ENCODE measurements at regions of chrX and their contacts with region 1.

Region 1: GRCh38 chrX:47233337-47234113 is 716 bp downstream of the USP11 start:
- DNase-seq: peak; percentile 92 to 95 (median 95)
- ATAC-seq: peak; percentile 94 to 98 (median 96)
- H3K4me3 ChIP-seq: peak overlapping the region; percentile 28 to 89 (median 70)
- H3K27ac ChIP-seq: peak overlapping the region; percentile 88 to 98 (median 95)
- H3K4me1 ChIP-seq: peaks cover 0 to 18% (median 5%) of the 10 kb centered on the region in 12 donors
- H3K27me3 ChIP-seq: peaks cover 0 to 20% (median 0%) of the 10 kb centered on the region in 9 donors
- CTCF ChIP-seq: no peak
- POLR2A ChIP-seq: peak in 1 of 2 donors; percentile 43

Region 2: GRCh38 chrX:47144626-47145394 is 88.7 kb before region 1 on chrX and contains the starts of genes NDUFB11 and RBM10:
- intact Hi-C with region 1: loop called in 1 of 10 experiments (anchors 5 kb)
- DNase-seq: peak; percentile 93 to 96 (median 95)
- ATAC-seq: peak; percentile 96 to 99 (median 98)
- H3K4me3 ChIP-seq: peak within 1 kb of the TSS; percentile 42 to 98 (median 73)
- H3K27ac ChIP-seq: peak within 1 kb of the TSS; percentile 89 to 98 (median 94)
- H3K4me1 ChIP-seq: peaks cover 0 to 32% (median 16%) of the 10 kb centered on the region in 12 donors
- H3K27me3 ChIP-seq: peaks cover 0 to 19% (median 0%) of the 10 kb centered on the region in 9 donors
- CTCF ChIP-seq: peak; percentile 53 to 78 (median 68)
- POLR2A ChIP-seq: peak in 1 of 2 donors; percentile 44
- total RNA-seq, gene NDUFB11: 133 to 217 (median 173) TPM
- total RNA-seq, gene RBM10: 17.5 to 44.6 (median 28.3) TPM

Region 3: GRCh38 chrX:47217642-47218279 is 15.8 kb before region 1 on chrX:
- intact Hi-C with region 1: loop called in 3 of 10 experiments (anchors 2 kb)
- DNase-seq: peak; percentile 95 to 99 (median 96)
- ATAC-seq: peak; percentile 87 to 93 (median 92)
- H3K4me3 ChIP-seq: peak overlapping the region; percentile 62 to 100 (median 87)
- H3K27ac ChIP-seq: peak overlapping the region; percentile 76 to 99 (median 98)
- H3K4me1 ChIP-seq: peaks cover 0 to 46% (median 15%) of the 10 kb centered on the region in 12 donors
- H3K27me3 ChIP-seq: no peaks in the 10 kb centered on the region
- CTCF ChIP-seq: no peak
- POLR2A ChIP-seq: peak in 1 of 2 donors; percentile 13

Measured in heart left ventricle (tissue), 16 donors.